ENCODE measurements at regions of chr5 and their contacts with region 1.

Region 1: DNA sequence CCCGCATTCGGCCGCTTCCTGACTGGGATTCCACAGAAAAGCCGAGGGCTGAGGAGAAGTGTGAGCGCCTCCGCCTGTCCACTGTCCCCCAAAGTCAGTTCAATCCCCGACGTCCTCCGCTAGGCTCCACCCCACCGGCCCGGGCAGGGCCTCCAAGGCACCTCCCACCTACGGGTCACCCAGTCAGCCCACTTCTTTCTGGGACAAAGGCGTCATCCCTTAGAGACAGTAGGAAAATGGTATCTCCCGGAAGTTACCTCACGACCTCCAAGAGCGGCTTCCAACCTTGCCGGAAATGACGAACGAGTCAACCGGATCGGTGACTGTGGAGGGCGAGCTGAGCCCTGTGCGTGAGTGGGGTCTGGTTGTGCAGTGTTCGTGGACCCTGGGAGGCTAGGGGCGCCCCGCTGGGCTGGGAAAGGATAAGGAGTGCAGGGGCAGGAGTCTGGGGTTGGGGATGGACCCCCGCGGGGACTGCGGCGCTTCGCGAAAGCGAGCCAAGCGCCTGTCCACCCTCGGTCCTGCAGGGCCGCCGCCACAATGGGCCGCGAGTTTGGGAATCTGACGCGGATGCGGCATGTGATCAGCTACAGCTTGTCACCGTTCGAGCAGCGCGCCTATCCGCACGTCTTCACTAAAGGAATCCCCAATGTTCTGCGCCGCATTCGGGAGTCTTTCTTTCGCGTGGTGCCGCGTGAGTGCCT is at the starts of genes GDF9 and UQCRQ:
- DNase-seq: peak; percentile 95 to 100 (median 97)

Region 2: GRCh38 chr5:132655821-132656773 is 210.4 kb before region 1 on chr5:
- intact Hi-C with region 1: loop called (anchors 10 kb)
- DNase-seq: peak in 5 of 10 donors; percentile 29 to 91 (median 80)

Region 3: GRCh38 chr5:132736853-132737833 is 129.4 kb before region 1 on chr5 and contains the start of gene KIF3A:
- intact Hi-C with region 1: loop called (anchors 5 kb)
- DNase-seq: peak; percentile 95 to 99 (median 96)

Region 4: GRCh38 chr5:132753135-132753987 is 113.1 kb before region 1 on chr5:
- intact Hi-C with region 1: loop called (anchors 5 kb)
- DNase-seq: peak in 9 of 10 donors; percentile 58 to 96 (median 78)

Region 5: DNA sequence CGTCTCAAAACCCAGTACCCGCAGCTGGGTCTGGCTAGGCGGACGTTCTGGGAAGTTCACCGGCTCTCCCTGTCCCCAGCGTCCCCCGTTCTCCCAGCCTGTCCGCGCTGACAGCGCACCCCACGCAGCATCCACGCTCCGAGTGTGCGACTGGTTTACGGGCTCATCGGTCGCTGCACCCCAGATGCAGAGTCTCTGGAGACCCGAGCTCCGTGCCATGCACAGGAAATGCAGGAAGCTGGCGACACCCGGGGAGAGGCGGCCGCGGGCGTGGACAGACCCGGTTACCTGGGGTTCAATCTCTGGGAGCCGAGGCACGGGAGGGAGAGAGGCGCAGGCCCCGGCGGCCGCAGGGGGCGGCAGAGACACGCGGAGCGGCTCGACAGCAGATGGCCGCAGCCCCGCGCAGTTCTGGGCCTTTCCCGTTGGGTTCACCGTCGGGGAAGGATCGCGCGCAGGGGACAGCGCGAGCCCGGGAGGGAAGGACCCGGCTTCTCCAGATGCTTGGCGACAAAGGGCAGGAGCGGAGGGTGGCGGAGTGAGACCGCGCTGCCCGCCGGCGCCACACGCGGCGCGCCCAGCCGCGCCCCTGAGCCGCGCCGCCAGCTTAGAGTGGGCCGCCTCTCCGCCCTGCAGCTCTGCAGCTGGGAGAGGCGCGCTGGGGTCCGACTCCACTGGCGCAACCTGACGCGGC is 36.6 kb before region 1 on chr5:
- intact Hi-C with region 1: loop called (anchors 5 kb)
- DNase-seq: peak; percentile 62 to 97 (median 72)

Measured in posterior cingulate gyrus (tissue), 11 donors.